ENCODE measurements at regions of chr20 and their contacts with region 1.

Region 1: GRCh38 chr20:41798930-41799502 is 180.8 kb upstream of the CHD6 start:
- DNase-seq: no peak
- H3K4me3 ChIP-seq: no peak overlapping the region
- H3K27ac ChIP-seq: no peak overlapping the region
- H3K4me1 ChIP-seq: peaks cover 0 to 7% (median 3%) of the 10 kb centered on the region in 4 experiments; a peak in 3 of 7 replicates
- H3K27me3 ChIP-seq: no peaks in the 10 kb centered on the region
- CTCF ChIP-seq: peak; percentile 14 to 35 (median 14); a peak in 2 of 4 replicates
- EP300 ChIP-seq: no peak
- POLR2A ChIP-seq: no peak
- RAD21 ChIP-seq: peak in 1 of 2 experiments; percentile 30; a peak in 2 of 4 replicates

Region 2: GRCh38 chr20:41783423-41784208 is 15.4 kb before region 1 on chr20:
- CTCF ChIA-PET with region 1: interaction called, 12 read pairs
- POLR2A ChIA-PET with region 1: no interaction called
- DNase-seq: no peak
- H3K4me3 ChIP-seq: no peak overlapping the region
- H3K27ac ChIP-seq: no peak overlapping the region
- H3K4me1 ChIP-seq: no peaks in the 10 kb centered on the region
- H3K27me3 ChIP-seq: no peaks in the 10 kb centered on the region
- CTCF ChIP-seq: no peak
- EP300 ChIP-seq: no peak
- POLR2A ChIP-seq: no peak
- RAD21 ChIP-seq: no peak

Region 3: GRCh38 chr20:41869261-41869660 is 70.2 kb after region 1 on chr20:
- CTCF ChIA-PET with region 1: no interaction called
- POLR2A ChIA-PET with region 1: no interaction called
- DNase-seq: no peak
- H3K4me3 ChIP-seq: no peak overlapping the region
- H3K27ac ChIP-seq: no peak overlapping the region
- H3K4me1 ChIP-seq: no peaks in the 10 kb centered on the region
- H3K27me3 ChIP-seq: no peaks in the 10 kb centered on the region
- CTCF ChIP-seq: no peak
- EP300 ChIP-seq: no peak
- POLR2A ChIP-seq: no peak
- RAD21 ChIP-seq: no peak

Measured in H1 (cell line).